ENCODE measurements at regions of chr12 and their contacts with region 1.

Region 1: DNA sequence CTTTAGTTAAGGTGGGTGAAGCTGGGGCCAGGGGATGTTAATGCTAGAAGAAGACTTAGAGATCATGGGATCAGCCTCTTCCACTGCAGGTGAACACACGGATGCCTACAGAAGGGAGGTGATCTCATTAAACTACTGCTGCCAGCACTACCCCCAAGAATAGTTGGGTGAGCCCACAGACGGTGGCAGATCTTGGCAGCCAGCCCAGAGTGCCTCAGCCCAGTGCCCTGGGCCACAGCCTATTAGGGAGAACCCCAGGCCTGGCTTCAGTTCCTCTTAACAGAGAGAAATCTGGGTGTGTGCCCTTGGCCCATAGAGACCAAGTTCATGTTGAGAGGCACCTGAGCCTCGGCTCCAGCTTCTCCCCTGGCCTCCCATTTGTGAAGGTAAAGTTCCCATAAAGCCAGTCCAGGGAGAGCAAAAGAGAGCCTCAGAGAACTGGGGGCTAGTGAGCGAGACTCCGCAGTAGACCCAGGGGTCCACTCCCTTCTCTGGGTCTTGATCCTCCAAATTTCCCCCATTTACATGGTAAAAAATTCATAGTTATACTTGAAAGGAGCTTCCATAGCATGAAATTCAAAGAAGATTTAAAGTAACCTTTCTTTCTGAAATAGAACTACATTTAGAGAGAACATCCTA is 125.0 kb upstream of the CCND2 start:
- DNase-seq: peak; percentile 58
- ATAC-seq: no peak
- H3K4me3 Mint-ChIP-seq: no peak overlapping the region
- H3K27ac Mint-ChIP-seq: peak overlapping the region; percentile 81
- H3K4me1 Mint-ChIP-seq: peaks cover 90% of the 10 kb centered on the region
- H3K27me3 Mint-ChIP-seq: no peaks in the 10 kb centered on the region

Region 2: GRCh38 chr12:4011597-4011996 is 136.9 kb before region 1 on chr12:
- CTCF ChIA-PET with region 1: no interaction called
- DNase-seq: no peak
- ATAC-seq: no peak
- H3K4me3 Mint-ChIP-seq: no peak overlapping the region
- H3K27ac Mint-ChIP-seq: no peak overlapping the region
- H3K4me1 Mint-ChIP-seq: no peaks in the 10 kb centered on the region
- H3K27me3 Mint-ChIP-seq: no peaks in the 10 kb centered on the region

Region 3: DNA sequence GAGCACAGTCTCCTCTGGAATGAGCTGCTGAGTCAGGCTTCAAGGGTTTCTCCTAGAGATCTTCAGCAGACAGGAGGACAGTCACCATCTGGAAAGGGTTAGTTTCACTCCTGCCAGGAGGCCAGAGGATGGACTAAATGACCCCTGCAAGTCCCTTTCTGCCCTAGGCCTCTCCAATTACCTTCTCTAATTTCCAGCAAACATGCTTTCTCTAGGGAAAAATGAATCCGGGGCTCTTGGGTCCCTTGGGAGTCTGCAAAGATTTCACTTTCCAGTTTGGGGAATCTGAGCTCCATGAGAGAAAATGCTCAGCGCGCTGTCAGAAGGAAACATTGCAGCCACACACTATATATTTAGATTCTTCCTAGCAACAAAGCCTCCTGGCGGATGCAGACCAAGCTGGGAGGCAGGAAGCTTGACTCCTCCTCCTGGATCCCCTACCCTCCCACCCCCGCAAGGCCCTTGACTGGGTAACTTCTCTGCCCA is 59.4 kb before region 1 on chr12:
- CTCF ChIA-PET with region 1: no interaction called
- DNase-seq: no peak
- ATAC-seq: no peak
- H3K4me3 Mint-ChIP-seq: no peak overlapping the region
- H3K27ac Mint-ChIP-seq: no peak overlapping the region
- H3K4me1 Mint-ChIP-seq: peaks cover 4% of the 10 kb centered on the region
- H3K27me3 Mint-ChIP-seq: peaks cover 14% of the 10 kb centered on the region

Region 4: DNA sequence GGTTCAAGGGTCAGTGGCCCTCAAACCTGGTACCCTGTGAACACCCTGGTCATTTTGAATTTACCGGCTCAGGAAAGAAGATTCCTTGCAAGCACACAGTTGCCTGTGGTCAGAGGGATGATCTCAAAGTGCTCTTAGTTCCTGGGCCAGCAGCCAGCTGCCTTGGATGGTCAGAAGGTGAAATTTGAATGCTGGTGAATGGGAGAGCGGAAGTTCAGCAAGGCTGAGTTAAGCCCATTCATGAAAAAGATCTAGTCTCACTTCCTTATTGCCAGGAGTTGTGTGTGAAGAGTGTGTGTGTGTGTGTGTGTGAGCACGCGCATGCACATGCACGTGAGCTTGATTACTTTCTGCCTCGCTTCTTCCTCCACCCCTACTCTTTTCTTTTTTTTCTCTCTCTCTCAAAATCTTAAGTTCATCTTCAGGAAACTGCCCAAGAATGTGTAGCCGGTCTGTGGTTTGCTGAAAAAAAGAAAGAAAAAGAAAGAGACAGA is 30.5 kb before region 1 on chr12:
- CTCF ChIA-PET with region 1: interaction called, 49 read pairs
- DNase-seq: peak; percentile 47
- ATAC-seq: peak; percentile 30
- H3K4me3 Mint-ChIP-seq: peak overlapping the region; percentile 59
- H3K27ac Mint-ChIP-seq: peak overlapping the region; percentile 89
- H3K4me1 Mint-ChIP-seq: peaks cover 70% of the 10 kb centered on the region
- H3K27me3 Mint-ChIP-seq: no peaks in the 10 kb centered on the region

Region 5: DNA sequence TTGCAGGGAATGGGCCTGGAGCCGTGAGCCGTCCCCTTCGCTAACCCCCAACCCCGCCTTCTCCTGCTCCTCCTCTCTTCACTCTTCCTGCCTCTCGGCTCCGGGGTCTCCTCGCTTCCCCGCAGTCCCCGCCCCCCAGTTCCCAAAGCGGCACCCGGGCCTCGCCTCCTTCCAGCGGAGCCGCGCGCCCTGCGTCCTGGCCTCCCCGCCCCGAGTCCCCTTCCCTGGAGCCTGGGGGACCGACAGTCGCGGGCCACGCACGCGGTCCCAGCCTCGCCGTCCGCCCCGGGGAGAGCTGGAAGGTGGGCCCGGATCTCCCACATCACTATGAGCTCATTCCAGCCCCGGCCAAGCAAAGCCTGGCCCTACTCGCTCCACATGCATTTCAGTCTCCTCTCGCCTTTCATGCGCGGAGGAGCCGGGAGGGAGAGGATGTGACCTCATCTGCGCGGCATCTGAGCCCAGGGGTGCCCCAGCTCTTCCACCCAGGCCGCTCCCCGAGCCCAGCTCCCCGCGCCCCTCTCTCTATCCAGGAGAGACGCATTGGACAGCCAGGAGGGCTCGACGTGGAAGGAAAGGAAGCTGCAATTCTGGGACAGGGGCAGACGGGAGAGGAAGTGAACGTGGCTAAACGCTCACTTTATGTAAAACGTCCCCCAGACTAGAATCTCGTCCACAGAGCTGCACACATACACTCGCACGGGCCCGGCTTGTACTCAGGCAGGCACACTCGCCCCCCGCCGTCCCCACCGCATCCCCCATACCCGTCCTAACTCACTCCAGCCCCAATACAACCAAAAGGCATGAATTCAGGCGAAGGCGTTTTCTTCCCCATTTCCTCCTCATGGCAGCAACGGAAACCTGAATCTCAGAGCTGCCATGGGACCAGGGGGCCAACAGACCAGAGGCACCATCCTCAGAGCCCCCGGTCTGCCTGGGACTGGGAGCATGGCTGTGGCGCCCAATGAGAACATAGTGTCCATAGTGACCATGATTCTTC is 16.3 kb after region 1 on chr12:
- CTCF ChIA-PET with region 1: interaction called, 12 read pairs
- DNase-seq: peak; percentile 81
- ATAC-seq: peak; percentile 93
- H3K4me3 Mint-ChIP-seq: peak overlapping the region; percentile 75
- H3K27ac Mint-ChIP-seq: peak overlapping the region; percentile 93
- H3K4me1 Mint-ChIP-seq: peaks cover 51% of the 10 kb centered on the region
- H3K27me3 Mint-ChIP-seq: no peaks in the 10 kb centered on the region

Region 6: DNA sequence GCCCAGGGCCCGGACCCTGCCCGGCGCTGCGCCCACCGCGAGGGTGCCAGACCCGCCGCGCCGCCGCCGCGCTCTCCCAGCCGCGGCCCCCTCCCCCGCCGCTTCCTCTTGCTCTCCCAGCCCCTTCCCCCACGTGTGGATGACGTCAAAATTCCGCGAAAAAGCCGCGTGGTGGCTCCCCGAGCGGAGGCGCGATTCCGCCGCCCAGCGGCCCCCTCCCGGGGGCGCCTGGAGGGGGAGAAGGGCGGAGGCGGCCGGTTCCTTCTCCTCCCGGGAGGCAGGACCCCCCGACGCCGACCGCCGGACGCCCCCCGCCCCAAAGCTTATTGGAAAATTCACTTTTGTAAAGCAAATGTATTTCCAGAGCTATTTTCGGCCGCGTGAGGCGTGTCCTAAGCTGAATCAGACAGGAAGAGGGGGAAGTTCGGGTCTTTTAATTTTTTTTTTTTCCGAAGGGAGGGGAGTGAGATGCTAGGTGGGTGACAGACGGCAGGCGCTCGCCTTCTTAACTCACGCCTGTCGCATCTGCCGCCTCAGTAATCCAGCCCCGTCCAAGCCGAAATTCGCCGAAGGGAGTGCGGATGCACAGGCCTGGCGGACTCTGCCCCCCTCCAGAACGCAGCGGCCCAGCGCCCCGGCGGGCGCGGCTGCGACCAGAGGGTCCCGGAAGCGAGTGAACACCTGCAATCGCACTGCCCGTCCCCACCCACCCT is 120.9 kb after region 1 on chr12:
- CTCF ChIA-PET with region 1: interaction called, 97 read pairs
- DNase-seq: peak; percentile 97
- ATAC-seq: peak; percentile 14
- H3K4me3 Mint-ChIP-seq: peak overlapping the region; percentile 88
- H3K27ac Mint-ChIP-seq: peak overlapping the region; percentile 100
- H3K4me1 Mint-ChIP-seq: peaks cover 25% of the 10 kb centered on the region
- H3K27me3 Mint-ChIP-seq: peaks cover 12% of the 10 kb centered on the region

Region 7: DNA sequence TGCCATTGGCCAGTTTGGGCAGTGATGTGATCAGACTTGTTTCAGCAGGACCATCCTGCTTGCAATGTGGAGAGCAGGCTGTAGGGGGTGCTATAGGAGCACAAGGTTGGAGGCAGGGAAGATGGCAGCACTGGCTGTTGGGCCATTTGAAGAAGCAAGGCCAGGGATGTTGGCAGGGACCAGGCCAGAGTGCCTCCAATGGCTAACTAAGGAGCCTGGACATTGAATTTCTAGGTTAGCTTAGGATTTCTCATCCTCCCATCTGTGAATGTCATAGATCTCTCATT is 207.4 kb after region 1 on chr12:
- CTCF ChIA-PET with region 1: no interaction called
- DNase-seq: peak; percentile 80
- ATAC-seq: no peak
- H3K4me3 Mint-ChIP-seq: no peak overlapping the region
- H3K27ac Mint-ChIP-seq: no peak overlapping the region
- H3K4me1 Mint-ChIP-seq: peaks cover 10% of the 10 kb centered on the region
- H3K27me3 Mint-ChIP-seq: no peaks in the 10 kb centered on the region